Activated CD8-positive, alpha-beta T cell treated with anti-CD3 and anti-CD28 coated beads for 36 hours (primary cell): ENCODE measurements at regions of chr15 and their contacts with region 1.

Region 1: DNA sequence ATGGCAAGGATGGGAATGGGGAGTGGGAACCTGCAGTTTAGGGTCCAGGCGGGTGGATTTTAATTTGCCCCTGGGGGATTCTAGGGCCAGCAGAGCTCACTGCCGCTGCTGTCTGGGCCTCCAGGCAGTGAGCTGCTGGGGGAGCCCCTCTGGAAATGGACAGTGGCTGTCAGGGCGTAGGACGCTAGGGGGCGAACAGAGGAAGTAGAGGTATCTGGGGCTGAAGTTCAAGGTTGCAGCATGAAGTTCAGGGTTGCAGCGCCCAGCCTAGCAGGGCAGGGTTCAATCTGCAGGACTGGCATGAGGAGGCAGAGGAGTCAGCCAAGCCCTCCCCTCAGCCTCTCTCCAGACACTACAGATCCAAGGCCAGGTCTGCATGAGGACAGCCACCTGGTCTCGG is 49.6 kb downstream of the APBA2 start:
- DNase-seq: peak; percentile 85
- ATAC-seq: peak; percentile 64
- H3K4me3 Mint-ChIP-seq: no peak overlapping the region
- H3K27ac Mint-ChIP-seq: no peak overlapping the region
- H3K4me1 Mint-ChIP-seq: peaks cover 71% of the 10 kb centered on the region
- H3K27me3 Mint-ChIP-seq: no peaks in the 10 kb centered on the region
- CTCF ChIP-seq: peak; percentile 51

Region 2: DNA sequence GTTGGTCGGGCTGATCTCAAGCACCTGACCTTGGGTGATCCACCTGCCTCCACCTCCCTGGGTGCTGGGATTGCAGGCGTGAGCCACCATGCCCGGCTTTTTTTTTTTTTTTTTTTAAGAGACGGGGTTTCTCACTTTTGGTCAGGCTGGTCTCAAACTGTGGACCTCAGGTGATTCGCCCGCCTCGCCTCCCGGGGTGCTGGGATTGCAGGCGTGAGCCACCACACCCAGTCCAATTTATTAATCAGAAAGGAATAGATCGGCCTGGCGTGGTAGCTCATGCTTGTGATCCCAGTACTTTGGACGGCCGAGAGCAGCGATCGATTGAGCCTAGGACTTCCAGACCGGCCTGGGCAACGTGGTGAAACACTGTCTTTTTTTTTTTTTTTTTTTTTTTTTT is 209.2 kb before region 1 on chr15:
- CTCF ChIA-PET with region 1: no interaction called
- POLR2A ChIA-PET with region 1: no interaction called
- intact Hi-C with region 1: no loop called
- DNase-seq: no peak
- ATAC-seq: no peak
- H3K4me3 Mint-ChIP-seq: no peak overlapping the region
- H3K27ac Mint-ChIP-seq: no peak overlapping the region
- H3K4me1 Mint-ChIP-seq: peaks cover 12% of the 10 kb centered on the region
- H3K27me3 Mint-ChIP-seq: no peaks in the 10 kb centered on the region
- CTCF ChIP-seq: no peak

Region 3: GRCh38 chr15:28921919-28922706 is 13.2 kb before region 1 on chr15:
- CTCF ChIA-PET with region 1: interaction called, 15 read pairs
- POLR2A ChIA-PET with region 1: no interaction called
- intact Hi-C with region 1: no loop called
- DNase-seq: peak; percentile 10
- ATAC-seq: no peak
- H3K4me3 Mint-ChIP-seq: no peak overlapping the region
- H3K27ac Mint-ChIP-seq: no peak overlapping the region
- H3K4me1 Mint-ChIP-seq: peaks cover 64% of the 10 kb centered on the region
- H3K27me3 Mint-ChIP-seq: no peaks in the 10 kb centered on the region
- CTCF ChIP-seq: peak; percentile 37

Region 4: DNA sequence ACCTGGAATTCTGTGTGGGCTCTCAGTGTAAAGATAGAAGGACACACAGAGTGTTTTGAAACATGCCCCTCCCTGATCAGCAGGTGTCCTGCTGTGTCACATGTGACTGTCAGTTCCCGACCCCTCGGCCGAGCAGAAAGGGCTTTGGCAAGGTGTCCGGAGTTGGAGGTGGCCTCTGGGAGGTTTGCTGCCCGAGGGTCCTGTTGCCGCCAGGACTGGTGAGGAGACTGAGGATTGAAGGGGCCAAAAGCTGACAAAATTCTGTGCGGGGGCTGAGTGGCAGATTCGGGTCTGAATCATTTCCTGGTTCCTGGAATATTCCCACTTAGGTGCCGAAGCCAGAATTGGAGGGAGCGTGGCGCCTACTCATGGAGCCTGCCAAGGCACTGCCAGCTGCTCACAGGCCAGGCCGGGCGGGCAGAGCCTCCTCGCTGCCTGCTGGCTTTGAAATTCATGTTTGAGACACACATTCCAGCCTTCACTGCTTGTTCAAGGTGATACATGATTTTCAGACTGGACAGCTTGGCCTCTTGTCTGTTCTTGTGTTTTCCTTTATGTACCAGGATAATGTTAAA is 34.3 kb after region 1 on chr15:
- CTCF ChIA-PET with region 1: interaction called, 38 read pairs
- POLR2A ChIA-PET with region 1: interaction called, 3 read pairs
- intact Hi-C with region 1: loop called (anchors 5 kb)
- DNase-seq: no peak
- ATAC-seq: no peak
- H3K4me3 Mint-ChIP-seq: no peak overlapping the region
- H3K27ac Mint-ChIP-seq: no peak overlapping the region
- H3K4me1 Mint-ChIP-seq: peaks cover 50% of the 10 kb centered on the region
- H3K27me3 Mint-ChIP-seq: no peaks in the 10 kb centered on the region
- CTCF ChIP-seq: no peak